Naive thymus-derived CD4-positive, alpha-beta T cell (primary cell): ENCODE measurements at regions of chr7 and their contacts with region 1.

Region 1: DNA sequence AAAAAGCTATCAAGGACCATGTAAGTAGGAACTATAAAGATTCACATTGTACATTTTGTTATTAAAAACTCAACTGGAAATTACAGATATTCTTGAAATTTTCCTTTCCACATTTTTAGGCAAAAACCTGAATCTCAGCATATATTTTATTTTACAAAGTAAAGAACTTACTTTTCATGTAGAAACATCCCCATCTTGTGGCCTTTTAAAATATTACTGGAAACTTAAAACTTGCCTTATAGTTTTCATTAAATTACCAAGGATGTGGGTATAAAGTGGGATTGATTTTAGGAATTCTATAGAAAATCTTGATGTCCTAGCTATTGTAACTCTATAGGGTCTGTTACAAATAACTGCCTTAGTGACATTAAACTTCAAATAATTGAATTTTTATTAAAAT is 10.6 kb downstream of the DBF4 start:
- DNase-seq: peak in 6 of 9 donors; percentile 8 to 49 (median 43)
- ATAC-seq: peak; percentile 48
- H3K4me3 ChIP-seq: no peak overlapping the region
- H3K4me3 Mint-ChIP-seq: no peak overlapping the region
- H3K27ac ChIP-seq: no peak overlapping the region
- H3K27ac Mint-ChIP-seq: no peak overlapping the region
- H3K4me1 ChIP-seq: no peaks in the 10 kb centered on the region
- H3K4me1 Mint-ChIP-seq: peaks cover 5 to 28% (median 13%) of the 10 kb centered on the region in 7 donors
- H3K27me3 ChIP-seq: no peaks in the 10 kb centered on the region
- H3K27me3 Mint-ChIP-seq: no peaks in the 10 kb centered on the region

Region 2: DNA sequence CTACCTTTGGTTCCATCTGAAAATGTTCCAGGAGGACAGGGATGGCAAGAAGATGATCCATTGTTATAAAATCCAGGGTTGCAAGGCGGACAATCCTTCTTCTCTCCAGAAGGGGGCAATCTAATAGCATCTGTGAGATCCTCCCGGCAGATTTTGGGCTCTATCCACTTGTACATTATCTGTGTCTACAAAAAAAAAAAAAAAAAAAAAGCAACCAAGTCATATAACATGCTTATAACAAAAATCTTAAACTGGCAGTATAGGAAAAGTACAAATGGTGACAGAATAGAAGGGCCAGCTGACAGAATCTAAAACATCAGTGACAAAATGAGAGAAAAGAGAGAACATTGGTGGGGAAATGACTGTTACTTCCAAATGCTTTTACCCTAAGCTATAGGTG is 960.1 kb before region 1 on chr7:
- CTCF ChIA-PET with region 1: no interaction called
- POLR2A ChIA-PET with region 1: no interaction called
- intact Hi-C with region 1: loop called in 1 of 2 experiments (anchors 5 kb)
- DNase-seq: peak in 7 of 9 donors; percentile 25 to 56 (median 38)
- ATAC-seq: peak; percentile 84
- H3K4me3 ChIP-seq: no peak overlapping the region
- H3K4me3 Mint-ChIP-seq: no peak overlapping the region
- H3K27ac ChIP-seq: no peak overlapping the region
- H3K27ac Mint-ChIP-seq: peak overlapping the region in 2 of 9 donors; percentile 28 to 53
- H3K4me1 ChIP-seq: no peaks in the 10 kb centered on the region
- H3K4me1 Mint-ChIP-seq: no peaks in the 10 kb centered on the region
- H3K27me3 ChIP-seq: no peaks in the 10 kb centered on the region
- H3K27me3 Mint-ChIP-seq: peaks cover 0 to 16% (median 4%) of the 10 kb centered on the region in 5 donors

Region 3: GRCh38 chr7:87416682-87417587 is 469.9 kb before region 1 on chr7:
- CTCF ChIA-PET with region 1: no interaction called
- POLR2A ChIA-PET with region 1: no interaction called
- intact Hi-C with region 1: loop called (anchors 1 to 2 kb)
- DNase-seq: peak in 8 of 9 donors; percentile 43 to 73 (median 63)
- ATAC-seq: peak; percentile 82
- H3K4me3 ChIP-seq: no peak overlapping the region
- H3K4me3 Mint-ChIP-seq: no peak overlapping the region
- H3K27ac ChIP-seq: no peak overlapping the region
- H3K27ac Mint-ChIP-seq: no peak overlapping the region
- H3K4me1 ChIP-seq: no peaks in the 10 kb centered on the region
- H3K4me1 Mint-ChIP-seq: no peaks in the 10 kb centered on the region
- H3K27me3 ChIP-seq: no peaks in the 10 kb centered on the region
- H3K27me3 Mint-ChIP-seq: peaks cover 0 to 7% (median 0%) of the 10 kb centered on the region in 5 donors

Region 4: GRCh38 chr7:87784423-87784822 is 102.5 kb before region 1 on chr7:
- CTCF ChIA-PET with region 1: no interaction called
- POLR2A ChIA-PET with region 1: no interaction called
- intact Hi-C with region 1: no loop called
- DNase-seq: no peak
- ATAC-seq: no peak
- H3K4me3 ChIP-seq: no peak overlapping the region
- H3K4me3 Mint-ChIP-seq: no peak overlapping the region
- H3K27ac ChIP-seq: no peak overlapping the region
- H3K27ac Mint-ChIP-seq: no peak overlapping the region
- H3K4me1 ChIP-seq: no peaks in the 10 kb centered on the region
- H3K4me1 Mint-ChIP-seq: no peaks in the 10 kb centered on the region
- H3K27me3 ChIP-seq: no peaks in the 10 kb centered on the region
- H3K27me3 Mint-ChIP-seq: peaks cover 7 to 15% (median 12%) of the 10 kb centered on the region in 5 donors

Region 5: DNA sequence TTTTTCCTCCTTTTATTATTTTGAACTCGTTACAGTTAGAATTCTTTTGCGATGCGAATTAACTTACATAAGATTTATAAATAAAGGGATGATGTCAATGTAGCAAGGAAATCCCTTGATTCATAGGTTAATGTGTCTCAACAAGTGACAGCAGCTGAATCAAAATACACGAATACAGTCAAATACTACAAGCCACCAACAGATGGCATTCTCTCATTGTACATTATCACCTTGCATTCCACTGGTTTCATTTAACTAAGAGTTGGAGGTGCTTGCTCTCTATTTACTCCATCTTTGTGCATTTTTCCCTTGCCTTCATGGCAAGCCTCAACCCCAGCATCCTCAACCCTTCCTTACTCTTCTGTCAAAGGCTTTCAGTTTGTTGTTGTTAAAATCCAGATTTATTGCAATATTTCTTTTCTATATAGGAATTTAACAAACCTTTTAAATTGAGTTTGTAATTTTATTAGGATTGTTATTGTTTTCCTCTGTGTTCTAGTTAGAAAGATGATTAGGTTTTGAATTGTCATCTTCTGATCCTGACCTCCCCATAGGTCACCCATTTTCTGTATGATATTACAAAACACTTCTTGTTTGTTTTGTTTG is 89.0 kb before region 1 on chr7:
- CTCF ChIA-PET with region 1: interaction called, 33 read pairs
- POLR2A ChIA-PET with region 1: no interaction called
- intact Hi-C with region 1: loop called (anchors 1 kb)
- DNase-seq: peak in 7 of 9 donors; percentile 11 to 49 (median 38)
- ATAC-seq: peak; percentile 77
- H3K4me3 ChIP-seq: no peak overlapping the region
- H3K4me3 Mint-ChIP-seq: no peak overlapping the region
- H3K27ac ChIP-seq: no peak overlapping the region
- H3K27ac Mint-ChIP-seq: no peak overlapping the region
- H3K4me1 ChIP-seq: no peaks in the 10 kb centered on the region
- H3K4me1 Mint-ChIP-seq: peaks cover 0 to 2% (median 0%) of the 10 kb centered on the region in 7 donors
- H3K27me3 ChIP-seq: no peaks in the 10 kb centered on the region
- H3K27me3 Mint-ChIP-seq: peaks cover 7 to 19% (median 18%) of the 10 kb centered on the region in 5 donors

Region 6: GRCh38 chr7:88111136-88111743 is 224.4 kb after region 1 on chr7:
- CTCF ChIA-PET with region 1: no interaction called
- POLR2A ChIA-PET with region 1: no interaction called
- intact Hi-C with region 1: loop called (anchors 1 to 5 kb)
- DNase-seq: peak in 5 of 9 donors; percentile 2 to 27 (median 18)
- ATAC-seq: peak; percentile 45
- H3K4me3 ChIP-seq: no peak overlapping the region
- H3K4me3 Mint-ChIP-seq: no peak overlapping the region
- H3K27ac ChIP-seq: no peak overlapping the region
- H3K27ac Mint-ChIP-seq: no peak overlapping the region
- H3K4me1 ChIP-seq: no peaks in the 10 kb centered on the region
- H3K4me1 Mint-ChIP-seq: peaks cover 0 to 4% (median 0%) of the 10 kb centered on the region in 7 donors
- H3K27me3 ChIP-seq: no peaks in the 10 kb centered on the region
- H3K27me3 Mint-ChIP-seq: no peaks in the 10 kb centered on the region